Heart left ventricle (tissue), 16 donors: ENCODE measurements at regions of chr15 and their contacts with region 1.

Region 1: DNA sequence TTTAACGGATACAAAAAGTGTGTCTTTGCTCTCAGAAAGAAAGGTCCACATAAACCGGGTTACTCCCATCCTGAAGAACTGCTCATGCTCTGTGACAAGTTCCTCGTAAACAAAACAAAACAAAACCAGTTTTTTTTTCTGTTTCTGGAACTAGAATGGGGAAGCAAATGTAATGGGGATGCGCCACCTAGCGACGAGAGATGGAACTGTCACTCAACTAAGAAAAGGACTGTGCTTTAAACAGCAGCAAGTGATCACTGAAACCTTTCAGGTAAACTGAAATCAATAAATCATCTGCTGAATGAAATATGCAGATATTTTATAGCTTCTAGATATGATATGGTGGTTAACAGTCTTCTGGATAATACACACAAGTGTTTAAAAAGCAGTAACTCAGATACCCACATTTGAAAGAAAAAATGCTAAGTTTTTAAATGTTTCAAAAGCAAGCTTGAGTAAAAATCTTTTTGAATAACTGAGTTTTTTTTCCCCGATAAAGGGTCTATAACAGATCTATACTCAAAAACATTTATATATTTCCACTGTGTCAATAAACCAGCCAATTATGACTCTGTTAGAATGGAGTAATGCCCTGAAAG is 10.9 kb downstream of the TM2D3 start:
- DNase-seq: peak in 4 of 5 donors; percentile 49 to 74 (median 61)
- ATAC-seq: peak; percentile 49 to 68 (median 58)
- H3K4me3 ChIP-seq: peak overlapping the region in 4 of 12 donors; percentile 1 to 13 (median 8)
- H3K27ac ChIP-seq: peak overlapping the region in 11 of 12 donors; percentile 3 to 76 (median 38)
- H3K4me1 ChIP-seq: peaks cover 2 to 28% (median 18%) of the 10 kb centered on the region in 12 donors
- H3K27me3 ChIP-seq: no peaks in the 10 kb centered on the region
- CTCF ChIP-seq: peak; percentile 91 to 98 (median 96)
- POLR2A ChIP-seq: no peak

Region 2: GRCh38 chr15:101307048-101307896 is 334.0 kb before region 1 on chr15:
- intact Hi-C with region 1: loop called in 2 of 10 experiments (anchors 5 kb)
- DNase-seq: peak in 1 of 5 donors; percentile 4
- ATAC-seq: peak in 1 of 4 donors; percentile 17
- H3K4me3 ChIP-seq: no peak overlapping the region
- H3K27ac ChIP-seq: no peak overlapping the region
- H3K4me1 ChIP-seq: no peaks in the 10 kb centered on the region
- H3K27me3 ChIP-seq: peaks cover 0 to 7% (median 0%) of the 10 kb centered on the region in 9 donors
- CTCF ChIP-seq: no peak
- POLR2A ChIP-seq: no peak

Region 3: DNA sequence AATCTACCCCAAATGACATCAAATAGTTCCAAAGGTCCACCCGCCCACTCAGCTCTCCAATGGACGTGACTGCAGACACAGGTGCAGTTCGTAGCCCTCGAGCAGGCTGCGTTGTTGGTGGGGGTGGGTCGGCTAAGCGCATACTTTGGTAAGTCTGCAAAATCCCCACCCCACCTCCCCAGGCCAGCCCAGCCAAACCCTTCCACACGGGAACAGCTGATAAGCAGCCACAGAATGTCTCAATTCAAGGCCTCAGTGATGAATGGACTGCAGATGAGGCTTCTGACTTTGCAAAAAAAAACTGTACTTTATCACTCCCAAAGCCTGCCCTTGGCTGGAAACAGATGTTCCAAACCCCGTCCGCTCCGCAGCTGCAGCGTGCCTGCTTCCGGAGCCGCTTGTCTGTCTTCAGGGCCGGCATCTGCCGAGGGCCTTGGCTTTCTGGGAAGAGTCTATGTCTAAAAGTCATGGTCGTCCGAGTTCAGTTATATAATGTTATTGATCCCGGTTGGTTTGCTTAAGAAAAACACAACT is 189.9 kb before region 1 on chr15:
- intact Hi-C with region 1: loop called in 1 of 10 experiments (anchors 10 kb)
- DNase-seq: peak; percentile 70 to 87 (median 80)
- ATAC-seq: peak; percentile 44 to 70 (median 64)
- H3K4me3 ChIP-seq: no peak overlapping the region
- H3K27ac ChIP-seq: peak overlapping the region in 9 of 12 donors; percentile 29 to 84 (median 46)
- H3K4me1 ChIP-seq: peaks cover 2 to 59% (median 39%) of the 10 kb centered on the region in 12 donors
- H3K27me3 ChIP-seq: no peaks in the 10 kb centered on the region
- CTCF ChIP-seq: no peak
- POLR2A ChIP-seq: no peak

Region 4: GRCh38 chr15:101501703-101502373 is 139.4 kb before region 1 on chr15:
- intact Hi-C with region 1: loop called in 1 of 10 experiments (anchors 10 kb)
- DNase-seq: peak in 2 of 5 donors; percentile 56 to 61
- ATAC-seq: peak; percentile 32 to 58 (median 52)
- H3K4me3 ChIP-seq: peak overlapping the region in 3 of 12 donors; percentile 2 to 13 (median 4)
- H3K27ac ChIP-seq: peak overlapping the region in 4 of 12 donors; percentile 71 to 84 (median 77)
- H3K4me1 ChIP-seq: peaks cover 0 to 38% (median 10%) of the 10 kb centered on the region in 12 donors
- H3K27me3 ChIP-seq: peaks cover 0 to 15% (median 0%) of the 10 kb centered on the region in 9 donors
- CTCF ChIP-seq: peak; percentile 28 to 66 (median 52)
- POLR2A ChIP-seq: no peak

Region 5: DNA sequence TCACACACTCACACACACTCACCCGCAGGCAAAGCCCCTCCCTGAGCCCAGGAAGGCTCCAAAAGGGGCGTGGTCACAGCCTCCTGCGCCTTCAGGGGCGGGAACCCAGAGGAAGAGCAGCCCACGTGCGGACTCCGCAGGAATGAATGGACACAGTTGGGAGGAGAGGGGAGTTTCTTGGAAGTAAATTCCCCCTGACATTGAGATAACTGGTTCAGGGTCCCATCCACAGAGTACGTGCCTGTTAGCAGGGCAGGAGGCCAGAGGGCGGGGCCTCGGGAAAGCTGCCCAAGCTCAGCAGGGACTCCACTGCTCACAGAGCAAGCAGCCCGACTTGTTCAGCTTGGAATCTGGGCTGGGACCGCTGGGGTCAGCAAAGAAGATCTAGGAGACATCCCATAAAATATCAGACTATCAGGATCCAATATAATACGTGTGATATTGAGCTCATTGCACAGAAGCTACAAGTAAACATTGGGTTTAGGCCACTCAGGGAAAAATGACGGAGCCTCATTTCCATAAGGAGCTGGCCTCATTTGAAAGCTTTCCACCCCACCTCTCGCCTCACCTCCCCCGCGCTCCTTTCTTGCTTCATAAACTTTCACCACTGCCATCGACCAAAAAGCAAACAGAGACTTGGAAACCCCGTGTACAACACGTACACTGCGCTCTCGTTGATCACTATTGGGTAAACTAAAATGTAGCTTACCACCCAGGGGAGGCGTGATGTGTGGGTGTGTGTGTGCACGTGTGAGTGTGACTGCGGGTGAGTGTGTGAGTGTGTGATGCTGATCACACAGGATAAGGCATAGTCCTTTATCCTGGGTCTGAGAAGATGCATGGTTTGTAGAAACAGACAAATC is 25.0 kb before region 1 on chr15:
- intact Hi-C with region 1: loop called in 1 of 10 experiments (anchors 2 kb)
- DNase-seq: peak; percentile 60 to 87 (median 81)
- ATAC-seq: peak; percentile 45 to 69 (median 60)
- H3K4me3 ChIP-seq: peak overlapping the region in 5 of 12 donors; percentile 3 to 22 (median 13)
- H3K27ac ChIP-seq: peak overlapping the region in 8 of 12 donors; percentile 4 to 77 (median 36)
- H3K4me1 ChIP-seq: peaks cover 0 to 81% (median 41%) of the 10 kb centered on the region in 12 donors
- H3K27me3 ChIP-seq: no peaks in the 10 kb centered on the region
- CTCF ChIP-seq: no peak
- POLR2A ChIP-seq: no peak